ENCODE measurements at regions of chr19 and their contacts with region 1.

Region 1: DNA sequence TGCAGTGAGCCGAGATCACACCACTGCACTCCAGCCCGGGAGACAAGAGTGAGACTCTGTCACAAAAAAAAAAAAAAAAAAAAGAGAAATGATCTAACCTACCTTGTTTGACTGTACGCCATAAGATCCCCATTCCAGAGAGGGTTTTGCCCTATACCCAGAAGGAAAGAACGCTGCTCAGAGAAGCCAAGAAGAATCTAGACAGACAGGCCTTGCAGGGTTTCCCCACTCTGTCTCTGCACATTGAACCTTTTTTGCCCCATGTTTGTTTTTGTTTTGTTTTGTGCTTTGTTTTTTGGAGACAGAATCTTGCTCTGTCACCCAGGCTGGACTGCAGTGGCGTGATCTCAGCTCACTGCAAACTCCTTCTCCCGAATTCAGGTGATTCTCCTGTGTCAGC is 7.4 kb upstream of the MAP1S start:
- DNase-seq: no peak
- H3K4me3 ChIP-seq: no peak overlapping the region
- H3K27ac ChIP-seq: no peak overlapping the region
- H3K4me1 ChIP-seq: peaks cover 0 to 7% (median 3%) of the 10 kb centered on the region in 6 donors
- H3K27me3 ChIP-seq: peaks cover 0 to 3% (median 0%) of the 10 kb centered on the region in 7 donors
- CTCF ChIP-seq: no peak
- POLR2A ChIP-seq: no peak

Region 2: DNA sequence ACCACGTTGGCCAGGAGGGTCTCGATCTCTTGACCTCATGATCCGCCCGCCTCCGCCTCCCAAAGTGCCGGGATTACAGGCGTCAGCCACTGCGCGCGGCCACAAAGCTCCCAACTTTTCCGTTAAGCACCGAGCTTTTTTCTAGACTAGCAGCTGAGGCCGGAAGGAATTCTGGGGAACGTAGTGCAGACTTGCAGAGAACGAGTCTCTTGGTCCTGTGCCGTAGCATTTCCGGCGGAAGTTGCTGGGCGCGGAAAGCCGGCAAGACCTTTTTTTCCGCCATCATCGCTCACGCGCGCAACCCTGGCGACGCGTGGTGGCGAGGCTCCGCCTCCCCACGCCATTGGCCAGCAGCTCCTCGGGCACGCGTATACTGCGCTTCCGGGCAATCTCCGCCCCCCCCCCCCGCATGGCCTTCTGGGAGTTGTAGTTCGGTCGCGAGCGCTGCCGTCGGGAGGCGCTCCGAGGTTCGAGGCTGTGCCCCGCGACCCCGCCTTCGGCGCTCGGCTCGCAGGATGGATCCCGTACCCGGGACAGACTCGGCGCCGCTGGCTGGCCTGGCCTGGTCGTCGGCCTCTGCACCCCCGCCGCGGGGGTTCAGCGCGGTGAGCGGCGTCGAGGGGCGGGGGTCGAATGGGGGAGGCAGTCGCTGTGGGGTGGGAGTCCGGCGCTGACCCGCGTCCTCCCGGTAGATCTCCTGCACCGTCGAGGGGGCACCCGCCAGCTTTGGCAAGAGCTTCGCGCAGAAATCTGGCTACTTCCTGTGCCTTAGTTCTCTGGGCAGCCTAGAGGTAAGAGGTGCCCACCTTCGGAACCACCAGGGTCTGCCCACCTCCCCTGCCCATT is 292.0 kb before region 1 on chr19 and contains the start of gene MVB12A:
- intact Hi-C with region 1: no loop called
- DNase-seq: peak; percentile 99
- H3K4me3 ChIP-seq: peak within 1 kb of the TSS; percentile 81 to 91 (median 84)
- H3K27ac ChIP-seq: peak within 1 kb of the TSS; percentile 76 to 91 (median 86)
- H3K4me1 ChIP-seq: peaks cover 0 to 30% (median 14%) of the 10 kb centered on the region in 6 donors
- H3K27me3 ChIP-seq: no peaks in the 10 kb centered on the region
- CTCF ChIP-seq: peak in 1 of 11 experiments; percentile 14
- POLR2A ChIP-seq: peak in 1 of 3 donors; percentile 18
- total RNA-seq, gene MVB12A: 31.7 to 45.2 (median 37.8) TPM

Region 3: DNA sequence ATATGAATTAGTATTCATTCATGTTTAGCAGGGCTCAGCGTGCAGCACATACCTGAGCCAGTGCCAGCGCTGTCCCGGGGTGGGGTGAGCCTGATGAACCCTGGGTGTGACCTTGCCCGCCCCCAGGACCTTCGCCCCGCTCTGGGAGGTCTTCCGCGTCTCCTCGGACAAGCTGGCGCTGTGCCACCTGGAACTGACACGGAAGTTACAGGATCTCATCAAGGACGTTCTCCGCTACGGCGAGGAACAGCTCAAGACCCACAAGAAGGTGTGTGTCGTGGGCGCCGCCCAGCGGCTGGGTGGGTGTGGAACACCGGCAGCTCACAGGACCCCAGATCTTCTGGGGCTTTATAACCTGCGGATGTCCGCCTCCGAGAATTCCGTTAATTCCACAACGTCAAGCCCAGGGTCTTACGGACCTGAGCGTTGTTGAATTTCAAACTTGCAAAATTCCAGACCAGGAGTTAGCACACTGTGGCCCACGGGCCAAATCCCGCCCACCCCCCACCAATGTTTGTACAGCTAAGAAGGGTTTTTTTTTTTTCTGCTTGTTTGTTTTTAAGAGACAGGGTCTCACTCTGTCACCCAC is 54.8 kb after region 1 on chr19:
- intact Hi-C with region 1: loop called (anchors 5 kb)
- DNase-seq: peak; percentile 94
- H3K4me3 ChIP-seq: peak overlapping the region in 1 of 8 donors; percentile 13
- H3K27ac ChIP-seq: peak overlapping the region in 3 of 8 donors; percentile 3 to 89 (median 49)
- H3K4me1 ChIP-seq: peaks cover 0 to 39% (median 17%) of the 10 kb centered on the region in 6 donors
- H3K27me3 ChIP-seq: no peaks in the 10 kb centered on the region
- CTCF ChIP-seq: peak; percentile 56 to 84 (median 78)
- POLR2A ChIP-seq: no peak

Measured in spleen (tissue), 13 donors.